Activated CD4-positive, alpha-beta memory T cell treated with anti-CD3 and anti-CD28 coated beads for 36 hours (primary cell): ENCODE measurements at regions of chr2 and their contacts with region 1.

Region 1: GRCh38 chr2:195575879-195576401 is 81.1 kb upstream of the SLC39A10 start:
- DNase-seq: no peak
- H3K4me3 Mint-ChIP-seq: no peak overlapping the region
- H3K27ac Mint-ChIP-seq: peak overlapping the region; percentile 64
- H3K4me1 Mint-ChIP-seq: peaks cover 68% of the 10 kb centered on the region
- H3K27me3 Mint-ChIP-seq: no peaks in the 10 kb centered on the region

Region 2: DNA sequence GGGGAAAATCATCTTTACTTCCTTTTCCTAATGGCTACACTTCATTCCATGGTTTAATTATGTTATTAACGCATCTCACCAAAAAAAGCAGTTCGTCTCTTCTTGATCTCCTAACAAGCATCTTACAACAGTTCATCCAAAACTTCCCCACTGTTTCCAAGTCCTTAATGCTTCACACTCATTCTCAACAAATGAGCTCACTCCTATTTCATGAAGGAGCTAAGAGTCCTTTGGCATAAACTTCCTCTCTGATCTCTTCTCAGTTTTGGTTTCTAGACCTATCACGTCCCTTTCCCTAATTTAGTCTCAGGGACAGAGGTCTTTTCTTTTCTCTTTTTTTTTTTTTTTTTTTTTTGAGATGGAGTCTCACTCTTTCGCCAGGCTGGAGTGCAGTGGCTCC is 124.8 kb before region 1 on chr2:
- CTCF ChIA-PET with region 1: no interaction called
- POLR2A ChIA-PET with region 1: no interaction called
- intact Hi-C with region 1: no loop called
- DNase-seq: no peak
- H3K4me3 Mint-ChIP-seq: no peak overlapping the region
- H3K27ac Mint-ChIP-seq: no peak overlapping the region
- H3K4me1 Mint-ChIP-seq: peaks cover 9% of the 10 kb centered on the region
- H3K27me3 Mint-ChIP-seq: no peaks in the 10 kb centered on the region

Region 3: DNA sequence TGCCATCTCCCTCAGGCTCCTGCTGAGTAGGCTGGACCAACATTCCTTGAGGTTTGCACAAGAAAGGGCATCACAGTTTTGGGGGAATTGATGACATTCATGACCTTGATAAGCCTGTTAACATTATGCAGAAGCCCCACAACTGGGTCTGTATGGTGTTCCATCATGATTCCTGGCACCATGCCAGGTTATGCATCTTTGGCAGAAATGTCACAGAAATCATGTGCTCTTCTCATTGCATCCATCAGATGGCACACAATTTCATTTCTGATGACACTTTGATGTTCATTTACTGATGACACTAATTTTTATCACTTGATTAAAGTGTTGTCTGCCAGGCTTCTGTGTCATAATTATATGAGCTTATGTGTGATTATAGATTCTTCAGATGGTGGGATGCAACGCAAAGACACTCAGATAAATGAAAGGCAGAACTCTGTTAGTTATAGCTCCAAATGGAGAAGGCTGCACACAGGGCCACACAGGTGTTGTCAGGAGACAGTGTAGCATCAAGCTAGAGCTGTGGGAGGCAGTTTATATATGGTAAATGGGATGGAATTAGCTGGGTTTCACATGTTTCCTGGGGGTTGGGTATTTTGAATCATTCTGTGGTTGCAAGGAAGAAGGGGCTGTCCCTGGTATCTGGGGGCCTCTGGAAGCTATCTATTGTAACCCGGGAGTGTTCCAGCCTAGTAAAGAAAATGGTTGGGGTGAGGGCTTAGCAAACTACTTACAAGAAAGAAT is 272.4 kb after region 1 on chr2:
- CTCF ChIA-PET with region 1: no interaction called
- POLR2A ChIA-PET with region 1: no interaction called
- intact Hi-C with region 1: loop called (anchors 10 kb)
- DNase-seq: no peak
- H3K4me3 Mint-ChIP-seq: no peak overlapping the region
- H3K27ac Mint-ChIP-seq: no peak overlapping the region
- H3K4me1 Mint-ChIP-seq: peaks cover 3% of the 10 kb centered on the region
- H3K27me3 Mint-ChIP-seq: no peaks in the 10 kb centered on the region

Region 4: GRCh38 chr2:195923889-195924288 is 347.9 kb after region 1 on chr2:
- CTCF ChIA-PET with region 1: no interaction called
- POLR2A ChIA-PET with region 1: no interaction called
- intact Hi-C with region 1: loop called (anchors 1 kb)
- DNase-seq: no peak
- H3K4me3 Mint-ChIP-seq: no peak overlapping the region
- H3K27ac Mint-ChIP-seq: no peak overlapping the region
- H3K4me1 Mint-ChIP-seq: no peaks in the 10 kb centered on the region
- H3K27me3 Mint-ChIP-seq: no peaks in the 10 kb centered on the region